Activated T-helper 1 cell treated with anti-CD3 and anti-CD28 coated beads, Interleukin-12 subunit alpha, Interleukin-12 subunit beta, Interleukin-2, Interleukin-4 antibody, amounts not matched to agents 30 ng/mL and 10 ng/mL and 1 ng/mL, durations not matched to agents 14 hours and 24 hours and 36 hours (primary cell): ENCODE measurements at regions of chr14 and their contacts with region 1.

Region 1: GRCh38 chr14:23186913-23187654 is 3.6 kb upstream of the SLC7A8 start:
- DNase-seq: no peak
- H3K4me3 Mint-ChIP-seq: no peak overlapping the region
- H3K27ac Mint-ChIP-seq: no peak overlapping the region
- H3K4me1 Mint-ChIP-seq: no peaks in the 10 kb centered on the region
- H3K27me3 Mint-ChIP-seq: peaks cover 15% of the 10 kb centered on the region

Region 2: DNA sequence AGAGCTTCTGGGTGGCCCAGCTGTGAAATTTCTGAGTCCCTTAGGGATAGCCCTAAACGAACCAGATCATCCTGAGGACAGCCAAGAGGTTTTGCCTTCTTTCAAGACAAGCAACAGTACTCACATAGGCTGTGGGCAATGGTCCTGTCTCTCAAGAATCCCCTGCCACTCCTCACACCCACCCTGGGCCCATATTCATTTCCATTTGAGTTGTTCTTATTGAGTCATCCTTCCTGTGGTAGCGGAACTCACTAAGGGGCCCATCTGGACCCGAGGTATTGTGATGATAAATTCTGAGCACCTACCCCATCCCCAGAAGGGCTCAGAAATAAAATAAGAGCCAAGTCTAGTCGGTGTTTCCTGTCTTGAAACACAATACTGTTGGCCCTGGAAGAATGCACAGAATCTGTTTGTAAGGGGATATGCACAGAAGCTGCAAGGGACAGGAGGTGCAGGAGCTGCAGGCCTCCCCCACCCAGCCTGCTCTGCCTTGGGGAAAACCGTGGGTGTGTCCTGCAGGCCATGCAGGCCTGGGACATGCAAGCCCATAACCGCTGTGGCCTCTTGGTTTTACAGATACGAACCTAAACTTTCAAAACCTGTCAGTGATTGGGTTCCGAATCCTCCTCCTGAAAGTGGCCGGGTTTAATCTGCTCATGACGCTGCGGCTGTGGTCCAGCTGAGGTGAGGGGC is 637.0 kb before region 1 on chr14:
- intact Hi-C with region 1: no loop called
- DNase-seq: peak; percentile 73
- H3K4me3 Mint-ChIP-seq: peak overlapping the region; percentile 79
- H3K27ac Mint-ChIP-seq: peak overlapping the region; percentile 99
- H3K4me1 Mint-ChIP-seq: peaks cover 96% of the 10 kb centered on the region
- H3K27me3 Mint-ChIP-seq: no peaks in the 10 kb centered on the region

Region 3: DNA sequence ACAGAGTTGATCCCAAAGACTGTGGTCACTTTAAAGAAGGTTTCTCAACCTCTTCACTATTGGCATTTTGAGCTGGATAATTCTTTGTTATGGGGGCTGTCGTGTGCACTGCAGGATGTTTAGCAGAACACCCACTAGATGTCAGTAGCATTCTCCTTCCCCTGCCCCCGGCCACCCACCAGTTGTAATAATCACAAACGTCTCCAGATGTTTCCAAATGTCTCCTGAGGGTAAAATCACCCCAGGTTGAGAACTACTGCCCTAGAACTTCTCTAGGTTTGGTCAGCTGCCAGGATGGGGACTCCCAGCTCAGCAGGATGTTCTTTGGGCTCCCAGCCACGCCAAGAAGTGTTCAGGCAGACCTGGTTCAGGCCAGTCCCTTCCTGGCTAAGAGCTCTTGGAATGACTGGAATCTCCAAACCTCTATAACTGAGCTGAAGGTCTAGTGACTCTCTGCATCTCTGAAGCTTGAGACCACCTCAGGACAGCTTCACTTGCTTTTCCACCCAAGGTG is 192.3 kb before region 1 on chr14:
- intact Hi-C with region 1: loop called (anchors 10 kb)
- DNase-seq: no peak
- H3K4me3 Mint-ChIP-seq: no peak overlapping the region
- H3K27ac Mint-ChIP-seq: no peak overlapping the region
- H3K4me1 Mint-ChIP-seq: no peaks in the 10 kb centered on the region
- H3K27me3 Mint-ChIP-seq: no peaks in the 10 kb centered on the region

Region 4: DNA sequence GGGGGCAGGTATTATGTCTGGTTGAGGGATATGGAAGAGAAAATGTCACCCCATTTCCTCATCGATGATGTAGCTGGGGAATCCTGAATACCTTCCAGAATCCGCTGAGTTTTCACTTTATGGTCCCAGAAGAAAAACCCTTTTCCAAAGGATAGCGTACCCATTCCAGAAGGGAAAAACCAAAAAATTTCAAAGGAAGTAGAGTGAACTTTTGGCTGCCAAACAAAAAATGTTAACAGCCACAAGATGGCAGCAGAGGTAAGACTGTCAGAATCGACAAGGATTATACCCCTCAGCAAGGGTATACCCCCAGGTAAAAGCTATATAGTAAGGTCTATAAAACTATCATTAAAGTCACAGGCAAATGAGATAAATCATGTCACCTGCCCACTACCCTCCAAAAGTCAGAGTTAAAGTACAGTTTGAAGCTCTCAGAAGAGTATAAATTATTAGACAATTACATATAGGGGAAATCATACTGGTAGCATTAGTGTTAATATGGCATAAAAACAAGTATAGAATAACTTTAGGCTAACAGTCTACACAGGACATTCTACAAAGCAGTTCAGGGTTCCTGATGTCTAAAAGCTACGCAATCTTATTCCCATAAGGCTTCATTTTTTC is 110.2 kb before region 1 on chr14:
- intact Hi-C with region 1: loop called (anchors 2 kb)
- DNase-seq: no peak
- H3K4me3 Mint-ChIP-seq: no peak overlapping the region
- H3K27ac Mint-ChIP-seq: no peak overlapping the region
- H3K4me1 Mint-ChIP-seq: peaks cover 11% of the 10 kb centered on the region
- H3K27me3 Mint-ChIP-seq: no peaks in the 10 kb centered on the region

Region 5: DNA sequence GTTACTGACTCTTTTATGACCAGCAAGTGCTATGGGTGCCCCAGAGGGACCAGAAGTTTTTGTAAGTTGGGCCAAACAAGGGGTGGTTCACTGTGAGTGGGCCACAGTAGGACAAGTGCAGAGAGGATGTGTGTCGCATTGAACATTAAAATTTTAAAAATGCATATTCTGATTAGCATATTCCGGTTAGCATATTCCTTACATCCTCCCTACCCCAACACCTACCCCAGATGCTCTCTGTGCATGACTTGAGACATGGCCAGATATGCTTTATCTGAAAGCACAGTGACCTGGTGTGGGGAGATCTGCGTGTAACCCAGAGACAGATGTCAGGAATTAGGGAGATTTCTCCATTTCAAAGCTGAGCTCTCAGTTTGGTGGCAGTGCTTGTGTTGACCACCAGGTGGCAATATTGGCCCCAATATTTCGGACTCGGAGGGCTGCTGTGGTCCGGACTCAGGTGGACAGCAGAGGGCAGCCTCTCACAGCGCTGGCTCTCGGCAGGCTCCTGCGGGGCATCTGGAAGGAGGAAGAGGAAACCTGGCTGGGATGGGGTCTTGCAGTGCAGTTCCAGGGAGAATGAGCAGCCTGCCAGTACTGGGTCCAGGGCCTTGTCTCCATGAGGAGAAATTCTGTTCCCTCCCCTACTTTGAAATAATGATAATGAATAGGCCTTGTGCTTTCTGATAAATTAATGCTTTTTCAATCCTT is 66.4 kb before region 1 on chr14:
- intact Hi-C with region 1: loop called (anchors 1 kb)
- DNase-seq: peak; percentile 73
- H3K4me3 Mint-ChIP-seq: peak overlapping the region; percentile 38
- H3K27ac Mint-ChIP-seq: peak overlapping the region; percentile 90
- H3K4me1 Mint-ChIP-seq: peaks cover 31% of the 10 kb centered on the region
- H3K27me3 Mint-ChIP-seq: peaks cover 10% of the 10 kb centered on the region

Region 6: DNA sequence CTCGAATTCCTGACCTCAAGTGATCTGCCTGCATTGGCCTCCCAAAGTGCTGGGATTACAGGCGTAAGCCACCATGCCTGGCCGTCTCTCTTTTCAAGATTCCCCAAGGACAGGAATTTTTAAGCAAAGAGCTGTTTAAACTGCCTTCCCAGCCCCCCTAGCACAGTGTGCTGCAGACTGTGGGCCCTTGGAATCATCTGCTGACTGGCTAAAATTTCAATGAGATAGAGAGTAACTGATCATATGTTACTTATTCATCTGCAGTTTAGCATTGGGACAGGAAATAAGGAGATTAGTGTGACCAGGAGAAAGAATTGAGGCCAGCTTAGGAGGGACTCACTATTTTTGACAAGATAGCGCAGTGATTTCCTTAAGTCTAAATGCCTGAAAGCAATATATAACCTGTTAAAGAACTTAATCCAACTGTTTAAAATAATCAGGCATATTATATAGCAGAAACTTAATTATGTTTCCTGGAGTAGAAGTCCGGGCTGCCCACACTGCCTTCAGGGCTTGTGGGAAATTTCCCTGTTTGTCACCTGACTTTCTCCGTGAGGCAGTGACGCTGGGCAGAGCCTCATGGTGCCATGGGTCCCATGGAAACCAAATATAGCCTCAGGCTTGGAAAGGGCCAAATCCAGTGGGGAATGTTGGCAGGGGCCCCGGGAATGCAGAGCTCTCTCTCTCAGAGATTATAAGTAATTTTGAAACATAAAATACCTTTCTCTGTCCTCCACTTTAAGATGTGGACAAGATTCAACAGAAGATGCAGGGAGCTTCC is 45.2 kb before region 1 on chr14:
- intact Hi-C with region 1: no loop called
- DNase-seq: no peak
- H3K4me3 Mint-ChIP-seq: no peak overlapping the region
- H3K27ac Mint-ChIP-seq: no peak overlapping the region
- H3K4me1 Mint-ChIP-seq: no peaks in the 10 kb centered on the region
- H3K27me3 Mint-ChIP-seq: peaks cover 14% of the 10 kb centered on the region